ENCODE measurements at regions of chr3 and their contacts with region 1.

Region 1: DNA sequence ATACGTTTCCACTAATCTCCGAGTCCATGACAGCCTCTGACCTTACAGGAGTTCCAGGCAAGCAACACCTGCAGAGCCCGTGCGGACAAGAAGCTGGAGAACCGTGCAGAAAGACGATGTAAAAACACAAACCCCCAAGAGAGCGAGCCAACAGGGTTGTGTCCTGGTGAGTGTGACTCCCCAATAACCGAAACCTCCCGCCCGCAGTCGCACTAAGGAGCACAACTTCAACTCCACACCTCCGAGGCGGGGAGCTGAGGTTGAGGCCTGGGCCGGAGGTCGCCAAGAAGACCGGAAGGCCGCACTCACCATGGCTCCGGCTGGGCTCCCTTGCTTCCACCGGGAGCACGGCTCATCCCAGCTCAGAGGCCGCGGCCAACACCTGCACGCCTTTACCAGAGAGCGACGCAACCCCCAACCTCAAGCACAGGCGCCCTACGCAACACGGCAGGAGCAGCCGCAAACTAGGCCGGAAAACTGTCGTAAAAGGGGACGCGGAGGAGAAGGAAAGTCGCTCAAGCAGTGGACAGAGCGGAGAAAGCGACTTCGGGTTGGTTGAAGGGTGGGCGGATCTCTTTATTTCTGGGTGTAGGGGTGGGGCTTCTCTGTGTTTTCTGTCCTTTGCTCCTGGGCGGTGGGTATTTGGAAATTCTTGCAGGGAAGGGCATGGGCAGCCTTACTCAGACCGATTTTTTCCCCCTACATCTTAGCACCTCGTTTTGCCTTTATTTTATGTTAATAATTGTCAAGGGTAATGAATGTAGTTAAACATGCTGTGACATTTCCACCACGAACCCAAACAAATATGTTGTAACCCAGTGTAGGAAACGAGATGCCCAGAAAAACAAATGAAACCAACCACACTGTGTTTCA is at the start of gene DNAJC19:
- DNase-seq: peak; percentile 87
- ATAC-seq: peak; percentile 99
- H3K4me3 ChIP-seq: peak within 1 kb of the TSS; percentile 89 to 99
- H3K27ac ChIP-seq: peak within 1 kb of the TSS; percentile 92
- H3K4me1 ChIP-seq: peaks cover 5% of the 10 kb centered on the region; the same call in 1 of the 2 replicates
- H3K27me3 ChIP-seq: peaks cover 6% of the 10 kb centered on the region; the same call in 1 of the 2 replicates
- CTCF ChIP-seq: no peak
- total RNA-seq, gene DNAJC19: 56.8 TPM

Region 2: DNA sequence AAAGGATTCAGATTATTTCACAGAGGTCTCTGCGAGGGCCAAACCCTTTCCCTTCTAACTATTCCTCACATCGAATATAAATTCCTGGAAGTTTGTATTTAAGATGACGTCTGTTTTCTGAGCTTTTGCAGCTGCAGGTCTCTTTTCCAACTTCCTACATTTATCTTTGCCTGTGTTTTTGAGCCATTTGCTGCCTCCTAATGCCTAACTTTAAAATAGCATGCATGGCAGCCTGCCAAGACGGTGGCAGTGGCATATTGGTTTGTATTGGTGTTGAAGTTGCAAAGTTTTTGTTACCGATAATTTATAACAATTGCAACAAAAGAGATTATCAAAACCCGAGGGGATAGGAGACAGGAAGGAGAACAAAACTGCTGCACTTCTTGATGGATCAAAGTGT is 187.1 kb after region 1 on chr3:
- CTCF ChIA-PET with region 1: interaction called, 7 read pairs
- POLR2A ChIA-PET with region 1: no interaction called
- in situ Hi-C with region 1: no loop called
- intact Hi-C with region 1: loop called (anchors 10 kb)
- DNase-seq: peak; percentile 18
- ATAC-seq: no peak
- H3K4me3 ChIP-seq: no peak overlapping the region
- H3K27ac ChIP-seq: no peak overlapping the region
- H3K4me1 ChIP-seq: no peaks in the 10 kb centered on the region
- H3K27me3 ChIP-seq: 0 out of 2 replicates have a peak, but pooled peaks cover 9% of the 10 kb centered on the region
- CTCF ChIP-seq: peak; percentile 76

Measured in Panc1 (cell line).